Panc1 (cell line): ENCODE measurements at regions of chr10 and their contacts with region 1.

Region 1: GRCh38 chr10:119222537-119222936 is 15.2 kb downstream of the GRK5 start:
- DNase-seq: no peak
- ATAC-seq: peak; percentile 83
- H3K4me3 ChIP-seq: peak overlapping the region; percentile 1 to 26; a peak in 1 of 4 replicates
- H3K27ac ChIP-seq: peak overlapping the region; percentile 65
- H3K4me1 ChIP-seq: peaks cover 37% of the 10 kb centered on the region
- H3K27me3 ChIP-seq: no peaks in the 10 kb centered on the region
- CTCF ChIP-seq: no peak

Region 2: GRCh38 chr10:119330342-119330741 is 107.8 kb after region 1 on chr10:
- CTCF ChIA-PET with region 1: interaction called, 14 read pairs
- POLR2A ChIA-PET with region 1: interaction called, 3 read pairs
- in situ Hi-C with region 1: no loop called
- intact Hi-C with region 1: no loop called
- DNase-seq: no peak
- ATAC-seq: no peak
- H3K4me3 ChIP-seq: no peak overlapping the region
- H3K27ac ChIP-seq: no peak overlapping the region
- H3K4me1 ChIP-seq: no peaks in the 10 kb centered on the region
- H3K27me3 ChIP-seq: no peaks in the 10 kb centered on the region
- CTCF ChIP-seq: no peak